ENCODE measurements at regions of chr5 and their contacts with region 1.

Region 1: DNA sequence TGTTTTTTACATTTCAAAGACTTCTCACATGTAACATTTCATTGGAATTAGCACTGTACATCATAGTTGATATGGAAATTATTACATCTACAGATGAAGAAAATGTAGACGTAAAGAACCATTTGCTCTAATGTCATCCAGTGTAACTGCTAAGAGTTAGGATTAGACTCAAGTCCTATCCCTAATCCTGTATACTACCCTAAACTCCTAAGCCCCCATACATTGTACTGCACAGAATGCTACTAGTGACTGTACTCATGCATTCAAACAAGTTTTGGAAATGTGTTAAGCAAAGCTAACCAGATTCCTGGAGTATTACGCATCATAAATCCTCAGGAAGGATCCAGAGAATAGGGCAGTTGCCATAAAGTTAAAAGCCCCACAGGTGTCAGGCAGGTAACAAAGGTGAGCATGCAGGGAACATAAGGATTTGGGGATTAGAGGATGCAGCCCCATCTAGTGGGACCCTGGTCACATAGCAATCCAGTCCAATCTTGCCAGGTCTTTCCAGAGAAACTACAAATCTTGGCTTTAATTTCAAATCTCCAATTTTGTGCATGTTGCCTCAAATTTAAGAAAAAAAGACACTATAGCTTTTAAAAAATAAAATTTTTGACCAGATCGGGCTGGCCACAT is 32.0 kb downstream of the HAVCR1 start:
- DNase-seq: peak; percentile 34
- H3K4me3 Mint-ChIP-seq: no peak overlapping the region
- H3K27ac Mint-ChIP-seq: no peak overlapping the region
- H3K4me1 Mint-ChIP-seq: peaks cover 34% of the 10 kb centered on the region
- H3K27me3 Mint-ChIP-seq: no peaks in the 10 kb centered on the region

Region 2: GRCh38 chr5:155943516-155944407 is 1083.1 kb before region 1 on chr5:
- CTCF ChIA-PET with region 1: no interaction called
- intact Hi-C with region 1: loop called (anchors 2 kb)
- DNase-seq: peak; percentile 62
- H3K4me3 Mint-ChIP-seq: no peak overlapping the region
- H3K27ac Mint-ChIP-seq: no peak overlapping the region
- H3K4me1 Mint-ChIP-seq: no peaks in the 10 kb centered on the region
- H3K27me3 Mint-ChIP-seq: peaks cover 10% of the 10 kb centered on the region

Region 3: DNA sequence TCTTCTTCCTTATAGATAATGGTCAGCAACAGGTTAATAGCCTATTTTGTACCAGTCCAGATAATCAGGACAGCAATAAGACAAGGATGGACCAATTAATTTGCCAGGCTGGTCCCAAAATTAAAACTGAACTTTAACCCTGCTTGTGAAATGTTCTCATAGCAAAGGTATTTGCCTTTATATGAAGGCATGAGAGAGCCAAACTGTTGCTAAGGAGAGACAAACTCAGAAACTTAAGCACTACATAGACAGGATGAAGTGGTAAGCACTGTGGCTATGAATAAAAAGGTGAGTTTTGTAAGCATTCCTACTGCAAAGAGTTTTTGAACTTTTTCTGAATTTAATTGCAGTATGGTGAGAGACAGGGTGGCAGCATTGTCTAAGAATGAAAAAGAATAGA is 351.5 kb before region 1 on chr5:
- CTCF ChIA-PET with region 1: no interaction called
- intact Hi-C with region 1: loop called (anchors 5 kb)
- DNase-seq: no peak
- H3K4me3 Mint-ChIP-seq: no peak overlapping the region
- H3K27ac Mint-ChIP-seq: no peak overlapping the region
- H3K4me1 Mint-ChIP-seq: no peaks in the 10 kb centered on the region
- H3K27me3 Mint-ChIP-seq: no peaks in the 10 kb centered on the region

Region 4: DNA sequence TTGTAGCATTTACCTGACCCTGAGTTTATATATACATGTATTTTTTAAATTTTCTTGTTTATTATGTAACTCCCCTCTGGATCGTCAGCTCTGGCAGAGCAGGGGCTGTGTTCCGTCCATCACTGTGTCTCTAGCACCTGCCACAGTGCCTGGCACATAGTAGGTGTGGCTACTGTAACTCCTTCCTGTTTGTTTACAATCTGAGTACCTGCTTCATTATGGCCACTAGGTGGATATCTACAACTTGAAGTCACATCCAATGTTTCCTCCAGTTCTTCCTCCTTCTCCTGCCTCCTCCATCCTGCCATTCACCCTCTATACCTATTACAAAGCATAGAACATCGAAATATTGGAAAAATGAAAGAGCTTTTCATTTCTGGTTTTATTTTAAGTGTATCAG is 191.0 kb before region 1 on chr5:
- CTCF ChIA-PET with region 1: interaction called, 3 read pairs
- intact Hi-C with region 1: loop called (anchors 1 kb)
- DNase-seq: peak; percentile 6
- H3K4me3 Mint-ChIP-seq: no peak overlapping the region
- H3K27ac Mint-ChIP-seq: no peak overlapping the region
- H3K4me1 Mint-ChIP-seq: peaks cover 4% of the 10 kb centered on the region
- H3K27me3 Mint-ChIP-seq: no peaks in the 10 kb centered on the region

Region 5: GRCh38 chr5:156934450-156935211 is 92.3 kb before region 1 on chr5:
- CTCF ChIA-PET with region 1: interaction called, 4 read pairs
- intact Hi-C with region 1: loop called (anchors 1 kb)
- DNase-seq: peak; percentile 88
- H3K4me3 Mint-ChIP-seq: peak overlapping the region; percentile 22
- H3K27ac Mint-ChIP-seq: peak overlapping the region; percentile 92
- H3K4me1 Mint-ChIP-seq: peaks cover 47% of the 10 kb centered on the region
- H3K27me3 Mint-ChIP-seq: no peaks in the 10 kb centered on the region

Region 6: GRCh38 chr5:157100140-157100679 is 73.3 kb after region 1 on chr5:
- CTCF ChIA-PET with region 1: no interaction called
- intact Hi-C with region 1: loop called (anchors 1 kb)
- DNase-seq: peak; percentile 71
- H3K4me3 Mint-ChIP-seq: peak overlapping the region; percentile 32
- H3K27ac Mint-ChIP-seq: peak overlapping the region; percentile 96
- H3K4me1 Mint-ChIP-seq: peaks cover 29% of the 10 kb centered on the region
- H3K27me3 Mint-ChIP-seq: no peaks in the 10 kb centered on the region

Region 7: GRCh38 chr5:157855404-157855994 is 828.6 kb after region 1 on chr5:
- CTCF ChIA-PET with region 1: no interaction called
- intact Hi-C with region 1: no loop called
- DNase-seq: peak; percentile 37
- H3K4me3 Mint-ChIP-seq: no peak overlapping the region
- H3K27ac Mint-ChIP-seq: peak overlapping the region; percentile 8
- H3K4me1 Mint-ChIP-seq: peaks cover 60% of the 10 kb centered on the region
- H3K27me3 Mint-ChIP-seq: no peaks in the 10 kb centered on the region